IMR-90 (cell line): ENCODE measurements at regions of chr2 and their contacts with region 1.

Region 1: DNA sequence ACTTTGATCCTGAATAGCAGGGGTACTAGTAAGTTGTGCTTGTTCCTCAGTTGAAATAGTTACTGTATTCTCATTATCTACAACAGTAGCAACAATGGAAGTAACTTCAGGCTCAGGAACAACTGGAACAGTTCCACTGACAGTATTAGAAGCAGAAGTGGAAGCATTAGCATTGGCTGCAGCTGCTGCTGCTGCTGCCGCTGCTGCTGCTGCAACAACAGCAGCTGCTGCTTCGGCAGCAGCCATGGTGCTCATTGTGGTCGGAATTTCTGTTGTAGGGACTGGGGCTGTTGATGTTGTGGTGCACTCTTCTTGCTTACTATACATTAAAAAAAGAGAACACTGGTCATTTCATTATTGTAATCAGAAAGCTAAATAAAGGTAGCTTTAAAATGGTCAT is 40.8 kb downstream of the PRPF40A start:
- DNase-seq: no peak
- ATAC-seq: no peak
- H3K4me3 ChIP-seq: no peak overlapping the region
- H3K27ac ChIP-seq: no peak overlapping the region
- H3K4me1 ChIP-seq: no peaks in the 10 kb centered on the region
- H3K27me3 ChIP-seq: no peaks in the 10 kb centered on the region
- CTCF ChIP-seq: no peak
- POLR2A ChIP-seq: no peak
- RAD21 ChIP-seq: no peak

Region 2: GRCh38 chr2:152421521-152422370 is 254.7 kb before region 1 on chr2:
- CTCF ChIA-PET with region 1: no interaction called
- POLR2A ChIA-PET with region 1: no interaction called
- dilution Hi-C with region 1: no loop called
- in situ Hi-C with region 1: no loop called
- intact Hi-C with region 1: no loop called
- DNase-seq: peak; percentile 99
- ATAC-seq: peak; percentile 92
- H3K4me3 ChIP-seq: no peak overlapping the region
- H3K27ac ChIP-seq: peak overlapping the region; percentile 58
- H3K4me1 ChIP-seq: peaks cover 15% of the 10 kb centered on the region
- H3K27me3 ChIP-seq: no peaks in the 10 kb centered on the region
- CTCF ChIP-seq: no peak
- POLR2A ChIP-seq: no peak
- RAD21 ChIP-seq: peak; percentile 15; the same call in 1 of the 2 replicates

Region 3: DNA sequence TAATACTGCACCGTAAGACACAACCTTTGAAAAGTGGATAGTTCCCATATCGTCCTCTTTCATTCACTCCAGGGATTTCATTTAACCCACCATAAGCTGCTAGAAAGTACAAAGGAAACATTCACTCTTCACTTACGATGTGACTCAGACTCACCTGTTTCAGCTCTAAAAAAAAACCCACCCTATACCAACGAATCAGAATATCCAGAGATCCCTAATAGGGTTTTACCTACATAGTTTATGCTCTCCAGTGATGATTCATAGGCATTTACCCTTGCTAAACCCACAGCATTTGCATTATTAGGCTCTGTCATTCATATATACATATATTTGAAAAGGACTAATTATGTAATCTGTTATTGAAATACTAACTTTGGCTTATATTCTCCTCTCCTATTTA is 19.4 kb before region 1 on chr2:
- CTCF ChIA-PET with region 1: no interaction called
- POLR2A ChIA-PET with region 1: no interaction called
- dilution Hi-C with region 1: no loop called
- in situ Hi-C with region 1: no loop called
- intact Hi-C with region 1: loop called (anchors 2 kb)
- DNase-seq: no peak
- ATAC-seq: no peak
- H3K4me3 ChIP-seq: no peak overlapping the region
- H3K27ac ChIP-seq: no peak overlapping the region
- H3K4me1 ChIP-seq: no peaks in the 10 kb centered on the region
- H3K27me3 ChIP-seq: no peaks in the 10 kb centered on the region
- CTCF ChIP-seq: no peak
- POLR2A ChIP-seq: no peak
- RAD21 ChIP-seq: no peak

Region 4: GRCh38 chr2:152815634-152816257 is 139.3 kb after region 1 on chr2:
- CTCF ChIA-PET with region 1: no interaction called
- POLR2A ChIA-PET with region 1: no interaction called
- dilution Hi-C with region 1: no loop called
- in situ Hi-C with region 1: no loop called
- intact Hi-C with region 1: no loop called
- DNase-seq: no peak
- ATAC-seq: no peak
- H3K4me3 ChIP-seq: no peak overlapping the region
- H3K27ac ChIP-seq: no peak overlapping the region
- H3K4me1 ChIP-seq: no peaks in the 10 kb centered on the region
- H3K27me3 ChIP-seq: no peaks in the 10 kb centered on the region; the same call in 1 of the 2 replicates
- CTCF ChIP-seq: no peak
- POLR2A ChIP-seq: no peak
- RAD21 ChIP-seq: no peak